Naive thymus-derived CD8-positive, alpha-beta T cell (primary cell): ENCODE measurements at regions of chr3 and their contacts with region 1.

Region 1: DNA sequence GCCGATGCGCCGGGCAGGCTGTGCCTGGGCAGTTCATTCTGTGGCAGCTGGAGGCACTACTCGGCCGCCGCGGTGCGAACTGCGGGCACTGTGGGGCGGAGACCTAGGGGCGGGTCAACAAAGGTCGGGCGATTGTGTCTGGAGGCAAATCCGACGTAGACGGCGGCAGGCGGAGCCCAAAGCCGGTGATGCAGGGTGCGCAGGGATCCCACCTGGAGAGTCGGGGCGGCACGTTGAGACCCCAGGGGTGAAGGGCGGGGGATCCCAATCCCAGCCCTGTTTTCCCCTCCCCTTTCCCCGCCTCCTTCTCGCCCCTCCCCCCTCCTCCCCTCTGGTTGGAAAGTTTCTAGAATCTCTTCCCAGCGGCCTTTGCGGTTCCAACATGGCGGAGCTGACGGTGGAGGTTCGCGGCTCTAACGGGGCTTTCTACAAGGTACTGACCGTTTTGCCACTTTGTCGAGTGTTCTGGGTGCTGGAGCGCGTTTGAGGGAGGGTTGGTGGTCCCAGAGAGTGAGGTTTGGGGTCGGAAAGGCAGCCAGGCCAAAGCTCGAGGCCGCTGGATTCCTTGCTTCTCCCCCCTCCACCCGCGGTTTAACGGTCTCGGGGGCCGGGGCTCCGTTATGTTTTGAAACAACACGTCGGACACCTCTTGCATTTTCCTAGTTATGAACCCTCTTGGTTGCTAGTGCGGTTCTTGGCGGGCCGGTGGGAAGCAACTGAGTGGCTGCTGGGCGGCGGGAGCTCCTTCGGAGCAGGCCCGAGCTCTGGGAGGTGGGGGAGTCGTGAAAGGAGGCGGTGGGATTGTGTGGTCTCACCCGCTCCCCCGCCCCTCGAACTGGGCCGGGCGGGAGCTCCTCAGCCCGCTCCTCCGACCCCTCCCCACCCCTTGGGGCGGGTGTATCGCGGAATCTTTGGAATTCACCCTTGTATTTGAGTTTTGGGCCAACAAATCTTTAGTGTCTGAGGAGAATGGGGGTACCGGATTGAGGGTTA is at the start of gene FXR1:
- DNase-seq: peak; percentile 79 to 95 (median 90)
- ATAC-seq: peak; percentile 90 to 91
- H3K4me3 Mint-ChIP-seq: peak within 1 kb of the TSS; percentile 91 to 97 (median 94)
- H3K27ac Mint-ChIP-seq: peak within 1 kb of the TSS; percentile 93 to 99 (median 98)
- H3K4me1 Mint-ChIP-seq: peaks cover 25 to 76% (median 65%) of the 10 kb centered on the region in 4 donors
- H3K27me3 Mint-ChIP-seq: no peaks in the 10 kb centered on the region
- polyA plus RNA-seq, gene FXR1: 53.1 to 62.5 (median 58.8) TPM

Region 2: DNA sequence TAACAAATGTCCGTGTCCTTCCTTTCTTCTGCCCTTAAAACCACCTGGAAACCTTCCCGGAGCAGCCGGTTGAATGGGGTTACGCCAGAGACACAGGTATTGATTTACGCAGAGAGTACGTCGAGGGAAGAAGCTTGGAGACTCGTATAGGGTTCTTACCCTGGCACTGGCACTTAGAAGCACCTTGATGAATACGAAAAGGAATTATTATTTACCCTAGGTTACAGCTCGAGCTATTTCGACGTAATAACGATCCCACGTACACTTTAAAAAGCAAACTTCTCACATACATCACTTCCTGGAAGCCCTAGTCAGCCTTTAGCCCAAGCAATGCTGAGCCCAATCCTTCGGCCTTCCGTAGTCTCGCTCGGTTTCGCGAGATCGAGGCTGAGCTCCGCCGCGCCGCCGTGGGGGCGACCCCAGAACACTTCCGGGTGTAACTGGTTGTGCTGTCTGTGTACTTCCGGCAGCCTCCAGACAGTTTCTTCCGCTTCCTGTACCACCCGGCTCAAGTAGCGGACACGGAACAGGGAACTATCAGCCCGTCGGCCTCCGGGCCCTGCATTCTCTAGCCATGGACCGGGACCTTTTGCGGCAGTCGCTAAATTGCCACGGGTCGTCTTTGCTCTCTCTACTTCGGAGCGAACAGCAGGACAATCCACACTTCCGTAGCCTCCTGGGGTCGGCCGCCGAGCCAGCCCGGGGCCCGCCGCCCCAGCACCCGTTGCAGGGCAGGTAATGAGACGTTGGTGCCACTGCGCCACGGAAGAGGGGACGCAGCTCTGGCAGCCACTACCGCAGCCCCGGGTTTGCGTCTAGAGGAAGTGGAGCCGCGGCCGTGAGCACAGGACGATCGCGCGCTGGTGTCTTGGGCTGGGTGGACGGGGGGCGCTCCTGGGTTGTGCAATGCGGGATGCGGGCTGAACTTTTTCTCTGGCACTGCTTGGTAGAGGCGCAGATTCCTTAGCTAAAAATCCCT is 310.6 kb before region 1 on chr3 and contains the start of gene TTC14:
- POLR2A ChIA-PET with region 1: interaction called, 19 read pairs
- DNase-seq: peak; percentile 78 to 96 (median 92)
- ATAC-seq: peak; percentile 88 to 92
- H3K4me3 Mint-ChIP-seq: peak within 1 kb of the TSS; percentile 87 to 99 (median 95)
- H3K27ac Mint-ChIP-seq: peak within 1 kb of the TSS; percentile 93 to 99 (median 98)
- H3K4me1 Mint-ChIP-seq: peaks cover 3 to 49% (median 43%) of the 10 kb centered on the region in 4 donors
- H3K27me3 Mint-ChIP-seq: peaks cover 4 to 28% (median 14%) of the 10 kb centered on the region in 5 donors
- polyA plus RNA-seq, gene TTC14: 13.7 to 26.7 (median 21.4) TPM

Region 3: DNA sequence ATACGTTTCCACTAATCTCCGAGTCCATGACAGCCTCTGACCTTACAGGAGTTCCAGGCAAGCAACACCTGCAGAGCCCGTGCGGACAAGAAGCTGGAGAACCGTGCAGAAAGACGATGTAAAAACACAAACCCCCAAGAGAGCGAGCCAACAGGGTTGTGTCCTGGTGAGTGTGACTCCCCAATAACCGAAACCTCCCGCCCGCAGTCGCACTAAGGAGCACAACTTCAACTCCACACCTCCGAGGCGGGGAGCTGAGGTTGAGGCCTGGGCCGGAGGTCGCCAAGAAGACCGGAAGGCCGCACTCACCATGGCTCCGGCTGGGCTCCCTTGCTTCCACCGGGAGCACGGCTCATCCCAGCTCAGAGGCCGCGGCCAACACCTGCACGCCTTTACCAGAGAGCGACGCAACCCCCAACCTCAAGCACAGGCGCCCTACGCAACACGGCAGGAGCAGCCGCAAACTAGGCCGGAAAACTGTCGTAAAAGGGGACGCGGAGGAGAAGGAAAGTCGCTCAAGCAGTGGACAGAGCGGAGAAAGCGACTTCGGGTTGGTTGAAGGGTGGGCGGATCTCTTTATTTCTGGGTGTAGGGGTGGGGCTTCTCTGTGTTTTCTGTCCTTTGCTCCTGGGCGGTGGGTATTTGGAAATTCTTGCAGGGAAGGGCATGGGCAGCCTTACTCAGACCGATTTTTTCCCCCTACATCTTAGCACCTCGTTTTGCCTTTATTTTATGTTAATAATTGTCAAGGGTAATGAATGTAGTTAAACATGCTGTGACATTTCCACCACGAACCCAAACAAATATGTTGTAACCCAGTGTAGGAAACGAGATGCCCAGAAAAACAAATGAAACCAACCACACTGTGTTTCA is 76.9 kb after region 1 on chr3 and contains the start of gene DNAJC19:
- POLR2A ChIA-PET with region 1: interaction called, 23 read pairs
- DNase-seq: peak; percentile 74 to 96 (median 91)
- ATAC-seq: peak; percentile 95
- H3K4me3 Mint-ChIP-seq: peak within 1 kb of the TSS; percentile 92 to 99 (median 98)
- H3K27ac Mint-ChIP-seq: peak within 1 kb of the TSS; percentile 93 to 99 (median 98)
- H3K4me1 Mint-ChIP-seq: peaks cover 7 to 43% (median 33%) of the 10 kb centered on the region in 4 donors
- H3K27me3 Mint-ChIP-seq: peaks cover 0 to 9% (median 2%) of the 10 kb centered on the region in 5 donors
- polyA plus RNA-seq, gene DNAJC19: 89.0 to 117 (median 106) TPM